Activated CD4-positive, alpha-beta T cell treated with anti-CD3 and anti-CD28 coated beads for 36 hours (primary cell): ENCODE measurements at regions of chr12 and their contacts with region 1.

Region 1: GRCh38 chr12:113473942-113474341 is 2.3 kb upstream of the LHX5 start:
- DNase-seq: no peak
- ATAC-seq: no peak
- H3K4me3 Mint-ChIP-seq: no peak overlapping the region
- H3K27ac Mint-ChIP-seq: no peak overlapping the region
- H3K4me1 Mint-ChIP-seq: peaks cover 4% of the 10 kb centered on the region
- H3K27me3 Mint-ChIP-seq: peaks cover 68% of the 10 kb centered on the region

Region 2: GRCh38 chr12:113453330-113453729 is 20.6 kb before region 1 on chr12:
- CTCF ChIA-PET with region 1: no interaction called
- POLR2A ChIA-PET with region 1: no interaction called
- intact Hi-C with region 1: no loop called
- DNase-seq: no peak
- ATAC-seq: no peak
- H3K4me3 Mint-ChIP-seq: no peak overlapping the region
- H3K27ac Mint-ChIP-seq: no peak overlapping the region
- H3K4me1 Mint-ChIP-seq: no peaks in the 10 kb centered on the region
- H3K27me3 Mint-ChIP-seq: peaks cover 21% of the 10 kb centered on the region

Region 3: DNA sequence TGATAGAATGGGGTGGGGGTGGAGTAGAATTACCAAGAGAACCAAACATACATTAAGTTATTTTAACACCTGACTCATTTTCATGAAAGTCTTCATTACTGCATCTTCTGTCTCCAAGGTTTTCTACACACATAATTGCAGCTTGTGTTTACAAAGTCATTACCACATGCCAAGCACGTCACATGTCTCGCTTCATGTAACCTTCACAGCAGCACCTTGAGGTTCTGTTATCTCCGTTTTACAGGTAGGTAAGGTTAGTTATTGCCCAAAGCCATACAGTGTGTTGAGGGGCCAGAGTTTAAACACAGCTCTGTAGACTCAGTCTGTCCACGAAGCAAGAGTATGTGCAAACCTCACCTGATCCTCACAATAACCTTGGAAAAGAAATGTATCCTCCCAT is 556.5 kb after region 1 on chr12:
- CTCF ChIA-PET with region 1: no interaction called
- POLR2A ChIA-PET with region 1: no interaction called
- intact Hi-C with region 1: no loop called
- DNase-seq: no peak
- ATAC-seq: no peak
- H3K4me3 Mint-ChIP-seq: no peak overlapping the region
- H3K27ac Mint-ChIP-seq: no peak overlapping the region
- H3K4me1 Mint-ChIP-seq: no peaks in the 10 kb centered on the region
- H3K27me3 Mint-ChIP-seq: peaks cover 15% of the 10 kb centered on the region

Region 4: GRCh38 chr12:114440270-114441038 is 966.5 kb after region 1 on chr12:
- CTCF ChIA-PET with region 1: no interaction called
- POLR2A ChIA-PET with region 1: no interaction called
- intact Hi-C with region 1: loop called in 1 of 2 experiments (anchors 2 kb)
- DNase-seq: no peak
- ATAC-seq: no peak
- H3K4me3 Mint-ChIP-seq: no peak overlapping the region
- H3K27ac Mint-ChIP-seq: no peak overlapping the region
- H3K4me1 Mint-ChIP-seq: no peaks in the 10 kb centered on the region
- H3K27me3 Mint-ChIP-seq: peaks cover 73% of the 10 kb centered on the region